Posterior vena cava (tissue), 2 donors: ENCODE measurements at regions of chr17 and their contacts with region 1.

Region 1: DNA sequence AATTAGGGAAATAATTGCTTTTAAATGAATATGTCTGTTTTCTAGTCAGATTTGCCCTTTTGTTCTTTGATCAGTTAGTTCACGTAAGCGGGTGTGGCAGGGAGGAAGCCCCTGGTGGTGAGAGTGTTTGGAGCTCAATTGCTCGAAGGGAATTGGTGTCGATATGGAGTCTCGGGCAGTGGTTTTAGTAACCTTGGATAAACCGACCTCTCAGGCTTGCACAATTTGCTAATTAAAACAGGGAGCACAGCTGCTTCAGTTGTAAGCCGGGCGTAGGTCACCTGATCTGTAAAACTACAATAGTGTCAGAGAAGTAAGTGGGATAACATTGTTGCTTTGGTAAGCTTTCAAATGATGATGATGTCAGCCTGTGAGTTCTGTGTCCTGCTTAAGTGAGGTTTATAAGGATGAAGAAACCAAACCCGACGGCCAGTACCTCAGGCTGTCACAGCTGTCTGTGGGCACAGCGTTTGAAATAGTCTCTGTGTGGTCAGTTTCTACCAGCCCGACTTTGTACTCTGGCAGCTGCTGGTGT is 2.9 kb downstream of the ZNF750 start:
- DNase-seq: peak; percentile 34

Region 2: GRCh38 chr17:81034779-81035388 is 1802.0 kb before region 1 on chr17 and contains the start of gene BAIAP2:
- intact Hi-C with region 1: loop called in 1 of 2 experiments (anchors 5 kb)
- DNase-seq: peak; percentile 99
- total RNA-seq, gene BAIAP2: 18.2 to 30.5 TPM

Region 3: DNA sequence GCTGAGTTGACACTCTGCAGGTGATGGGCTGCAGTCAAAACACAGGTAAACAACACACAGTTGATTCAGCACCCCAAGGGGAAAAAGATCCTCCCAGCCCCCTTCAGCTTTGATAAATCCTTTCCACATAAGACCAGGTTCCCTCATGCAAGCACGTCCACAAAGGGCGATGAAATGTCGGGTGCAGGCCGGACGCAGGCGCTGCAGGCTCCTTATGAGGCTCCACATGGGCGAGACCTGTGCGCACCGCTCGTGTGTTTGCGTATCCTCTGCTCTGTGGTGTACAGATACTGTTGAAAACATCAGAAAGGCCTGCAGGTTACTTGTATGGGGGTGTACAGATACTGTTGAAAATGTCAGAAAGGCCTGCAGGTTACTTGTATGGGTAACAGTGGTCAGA is 17.3 kb after region 1 on chr17:
- intact Hi-C with region 1: loop called in 1 of 2 experiments (anchors 1 kb)
- DNase-seq: peak; percentile 73

Region 4: DNA sequence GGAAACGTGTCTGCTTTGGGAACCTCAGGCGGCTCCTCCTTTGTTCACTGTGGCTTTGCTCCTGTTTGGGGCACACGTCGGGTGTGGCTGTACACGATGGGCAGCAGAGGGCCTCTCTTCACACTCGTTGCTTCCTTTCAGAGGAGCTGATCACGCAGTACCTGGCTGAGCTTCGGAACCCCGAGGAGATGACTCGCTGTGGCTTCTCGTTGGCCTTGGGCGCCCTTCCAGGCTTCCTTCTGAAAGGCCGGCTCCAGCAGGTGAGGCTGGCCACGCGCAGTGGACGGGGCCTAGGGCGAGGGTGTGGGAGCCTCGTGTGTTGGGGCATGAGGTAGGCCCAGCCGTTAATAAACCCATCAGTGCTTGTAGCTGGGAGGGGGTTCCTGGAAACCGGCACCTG is 87.9 kb after region 1 on chr17:
- intact Hi-C with region 1: no loop called
- DNase-seq: no peak

Region 5: GRCh38 chr17:82938873-82939620 is 102.2 kb after region 1 on chr17:
- intact Hi-C with region 1: no loop called
- DNase-seq: peak; percentile 74